CD4-positive, alpha-beta T cell (primary cell): ENCODE measurements at regions of chr19 and their contacts with region 1.

Region 1: GRCh38 chr19:14529254-14530004 is at the start of gene TECR:
- DNase-seq: peak; percentile 99 to 100 (median 100)
- ATAC-seq: peak; percentile 92
- H3K4me3 ChIP-seq: peak within 1 kb of the TSS; percentile 92
- H3K4me3 Mint-ChIP-seq: peak within 1 kb of the TSS; percentile 92
- H3K27ac ChIP-seq: peak within 1 kb of the TSS; percentile 85 to 88
- H3K27ac Mint-ChIP-seq: peak within 1 kb of the TSS; percentile 100
- H3K4me1 ChIP-seq: peaks cover 59% of the 10 kb centered on the region
- H3K4me1 Mint-ChIP-seq: peaks cover 57% of the 10 kb centered on the region
- H3K27me3 ChIP-seq: no peaks in the 10 kb centered on the region
- H3K27me3 Mint-ChIP-seq: no peaks in the 10 kb centered on the region
- CTCF ChIP-seq: no peak
- total RNA-seq, gene TECR: 217 to 232 TPM

Region 2: DNA sequence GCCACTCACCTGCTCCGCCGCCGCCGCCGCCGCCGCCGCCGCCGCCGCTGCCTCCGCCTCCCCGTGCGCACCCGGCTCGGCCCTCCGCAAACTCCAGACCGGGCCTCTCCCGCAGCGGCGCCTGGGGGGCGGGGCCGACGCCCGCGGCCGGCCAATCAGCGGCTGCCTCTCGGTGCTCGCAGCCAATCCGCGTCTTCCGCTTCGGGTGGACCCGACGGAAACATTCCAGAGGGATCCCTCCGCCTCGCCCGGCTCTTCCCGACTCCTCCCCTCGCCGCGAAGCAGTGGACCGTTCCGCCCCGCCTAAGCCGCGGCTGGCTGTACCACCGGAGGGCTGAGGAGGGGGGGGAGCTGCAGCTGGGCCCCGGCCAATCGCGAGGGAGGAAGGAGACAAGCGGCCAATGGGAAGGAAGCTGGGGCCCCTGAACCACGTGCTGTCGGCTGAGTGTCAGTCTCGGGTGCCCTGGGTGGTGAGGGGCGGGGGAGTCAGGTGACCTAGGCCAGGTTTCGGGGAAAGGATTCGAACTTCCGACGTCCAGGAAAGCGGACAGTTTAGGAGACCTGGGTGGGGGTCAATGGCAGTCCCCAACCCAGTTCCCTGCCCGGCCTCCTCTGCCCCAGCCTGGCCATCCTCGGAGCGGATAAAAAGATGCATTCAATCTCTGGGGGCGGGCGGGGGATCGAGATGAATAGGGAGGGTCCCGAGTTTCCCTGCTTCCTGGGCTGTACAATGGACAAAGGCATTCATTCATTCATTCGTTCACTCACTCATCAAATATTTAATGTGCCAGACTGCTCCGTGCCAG is 33.2 kb before region 1 on chr19 and contains the start of gene GIPC1:
- CTCF ChIA-PET with region 1: no interaction called
- POLR2A ChIA-PET with region 1: interaction called, 7 read pairs
- intact Hi-C with region 1: loop called in 1 of 2 experiments (anchors 1 kb)
- DNase-seq: peak; percentile 61 to 91 (median 78)
- ATAC-seq: peak; percentile 87
- H3K4me3 ChIP-seq: peak within 1 kb of the TSS; percentile 76
- H3K4me3 Mint-ChIP-seq: peak within 1 kb of the TSS; percentile 91
- H3K27ac ChIP-seq: peak within 1 kb of the TSS; percentile 56 to 70
- H3K27ac Mint-ChIP-seq: peak within 1 kb of the TSS; percentile 70
- H3K4me1 ChIP-seq: peaks cover 30% of the 10 kb centered on the region
- H3K4me1 Mint-ChIP-seq: peaks cover 38% of the 10 kb centered on the region
- H3K27me3 ChIP-seq: no peaks in the 10 kb centered on the region
- H3K27me3 Mint-ChIP-seq: no peaks in the 10 kb centered on the region
- CTCF ChIP-seq: no peak
- total RNA-seq, gene GIPC1: 17.8 to 21.0 TPM

Region 3: GRCh38 chr19:14550201-14550784 is 20.9 kb after region 1 on chr19:
- CTCF ChIA-PET with region 1: interaction called, 7 read pairs
- POLR2A ChIA-PET with region 1: interaction called, 4 read pairs
- intact Hi-C with region 1: loop called (anchors 2 kb)
- DNase-seq: no peak
- ATAC-seq: no peak
- H3K4me3 ChIP-seq: no peak overlapping the region
- H3K4me3 Mint-ChIP-seq: no peak overlapping the region
- H3K27ac ChIP-seq: no peak overlapping the region
- H3K27ac Mint-ChIP-seq: peak overlapping the region; percentile 92
- H3K4me1 ChIP-seq: peaks cover 54% of the 10 kb centered on the region
- H3K4me1 Mint-ChIP-seq: peaks cover 48% of the 10 kb centered on the region
- H3K27me3 ChIP-seq: no peaks in the 10 kb centered on the region
- H3K27me3 Mint-ChIP-seq: no peaks in the 10 kb centered on the region
- CTCF ChIP-seq: no peak

Region 4: DNA sequence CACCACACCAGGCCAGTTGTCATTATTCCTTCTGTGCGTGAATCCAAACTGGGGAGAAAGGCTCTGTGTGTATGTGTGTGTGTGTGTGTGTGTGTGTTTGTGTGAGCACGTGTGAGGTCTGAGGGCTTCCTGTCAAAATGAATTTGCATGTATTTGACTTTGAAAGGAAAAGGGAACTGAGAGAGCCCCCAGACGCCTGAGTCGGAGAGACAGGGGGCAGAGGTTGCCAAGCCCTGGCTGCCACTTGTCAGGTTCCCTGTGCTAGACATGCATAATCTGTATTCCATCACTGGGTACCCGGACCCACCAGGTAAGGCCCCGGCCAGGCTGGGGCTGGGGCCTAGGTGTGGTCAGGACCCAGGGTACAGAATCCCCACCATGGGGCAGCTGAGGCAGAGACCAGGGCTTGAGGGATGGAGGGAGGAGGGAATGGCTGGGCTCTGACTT is 53.5 kb after region 1 on chr19 and contains the start of gene CLEC17A:
- CTCF ChIA-PET with region 1: no interaction called
- POLR2A ChIA-PET with region 1: no interaction called
- intact Hi-C with region 1: no loop called
- DNase-seq: peak in 1 of 14 experiments; percentile 38
- ATAC-seq: no peak
- H3K4me3 ChIP-seq: no peak within 1 kb of the TSS
- H3K4me3 Mint-ChIP-seq: no peak within 1 kb of the TSS
- H3K27ac ChIP-seq: no peak within 1 kb of the TSS
- H3K27ac Mint-ChIP-seq: no peak within 1 kb of the TSS
- H3K4me1 ChIP-seq: peaks cover 2% of the 10 kb centered on the region
- H3K4me1 Mint-ChIP-seq: no peaks in the 10 kb centered on the region
- H3K27me3 ChIP-seq: no peaks in the 10 kb centered on the region
- H3K27me3 Mint-ChIP-seq: no peaks in the 10 kb centered on the region
- CTCF ChIP-seq: no peak
- total RNA-seq, gene CLEC17A: not detected

Region 5: GRCh38 chr19:14595516-14595915 is 66.1 kb after region 1 on chr19:
- CTCF ChIA-PET with region 1: no interaction called
- POLR2A ChIA-PET with region 1: no interaction called
- intact Hi-C with region 1: no loop called
- DNase-seq: no peak
- ATAC-seq: no peak
- H3K4me3 ChIP-seq: no peak overlapping the region
- H3K4me3 Mint-ChIP-seq: no peak overlapping the region
- H3K27ac ChIP-seq: no peak overlapping the region
- H3K27ac Mint-ChIP-seq: no peak overlapping the region
- H3K4me1 ChIP-seq: no peaks in the 10 kb centered on the region
- H3K4me1 Mint-ChIP-seq: no peaks in the 10 kb centered on the region
- H3K27me3 ChIP-seq: no peaks in the 10 kb centered on the region
- H3K27me3 Mint-ChIP-seq: peaks cover 13% of the 10 kb centered on the region
- CTCF ChIP-seq: no peak